ENCODE measurements at regions of chr13 and their contacts with region 1.

Region 1: GRCh38 chr13:75416327-75417005 is 65.5 kb downstream of the TBC1D4 start:
- DNase-seq: no peak
- H3K4me3 Mint-ChIP-seq: no peak overlapping the region
- H3K27ac Mint-ChIP-seq: no peak overlapping the region
- H3K4me1 Mint-ChIP-seq: peaks cover 46% of the 10 kb centered on the region
- H3K27me3 Mint-ChIP-seq: no peaks in the 10 kb centered on the region
- CTCF ChIP-seq: no peak

Region 2: GRCh38 chr13:75452564-75452963 is 36.1 kb after region 1 on chr13:
- CTCF ChIA-PET with region 1: no interaction called
- POLR2A ChIA-PET with region 1: interaction called, 38 read pairs
- intact Hi-C with region 1: no loop called
- DNase-seq: peak; percentile 61
- H3K4me3 Mint-ChIP-seq: peak overlapping the region; percentile 69
- H3K27ac Mint-ChIP-seq: peak overlapping the region; percentile 83
- H3K4me1 Mint-ChIP-seq: peaks cover 23% of the 10 kb centered on the region
- H3K27me3 Mint-ChIP-seq: no peaks in the 10 kb centered on the region
- CTCF ChIP-seq: no peak

Measured in MCF 10A (cell line).